CD8-positive, alpha-beta T cell (primary cell): ENCODE measurements at regions of chr3 and their contacts with region 1.

Region 1: DNA sequence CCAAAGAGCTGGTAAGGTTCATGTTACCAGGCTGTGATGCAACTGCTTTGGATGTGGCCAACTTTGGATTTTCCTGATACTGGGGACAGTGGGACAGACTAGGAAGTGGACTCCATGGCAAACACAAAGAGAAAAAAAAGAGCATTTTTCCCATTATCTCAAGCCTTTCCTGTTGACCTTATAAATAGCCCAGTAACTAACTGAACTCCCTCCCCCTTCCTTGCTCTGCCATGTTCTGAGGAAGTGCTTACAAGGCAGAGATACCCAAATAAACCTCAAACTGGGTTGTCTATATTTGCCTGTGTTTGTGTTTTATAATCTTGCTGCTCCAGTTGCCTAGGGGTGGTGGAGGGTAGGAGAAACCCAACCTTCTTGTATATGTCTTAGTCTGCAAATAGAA is 27.3 kb upstream of the SLC9A9 start:
- DNase-seq: no peak
- ATAC-seq: no peak
- H3K4me3 ChIP-seq: no peak overlapping the region
- H3K4me3 Mint-ChIP-seq: no peak overlapping the region
- H3K27ac ChIP-seq: no peak overlapping the region
- H3K27ac Mint-ChIP-seq: no peak overlapping the region
- H3K4me1 ChIP-seq: no peaks in the 10 kb centered on the region
- H3K4me1 Mint-ChIP-seq: no peaks in the 10 kb centered on the region
- H3K27me3 ChIP-seq: no peaks in the 10 kb centered on the region
- H3K27me3 Mint-ChIP-seq: peaks cover 3% of the 10 kb centered on the region
- CTCF ChIP-seq: no peak

Region 2: DNA sequence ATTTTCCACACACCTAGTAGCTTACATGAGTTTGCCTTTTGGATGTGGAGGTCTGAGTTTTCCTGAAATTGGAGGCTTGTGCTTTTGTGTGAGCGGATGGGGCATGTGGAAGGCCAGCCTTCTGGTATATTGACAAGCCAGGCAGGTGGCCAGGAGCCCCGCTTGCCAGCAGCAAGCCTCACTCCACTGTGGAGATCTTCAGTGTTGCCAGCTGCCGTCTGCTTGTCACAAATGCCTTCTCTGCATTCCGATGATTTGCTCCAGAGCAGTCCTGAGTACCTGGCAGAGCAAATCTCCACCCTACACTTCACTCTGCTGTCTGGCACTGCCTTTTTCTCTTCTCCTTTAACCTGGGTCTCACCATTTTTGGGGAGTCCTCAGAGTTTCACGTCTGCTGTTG is 785.1 kb before region 1 on chr3:
- CTCF ChIA-PET with region 1: no interaction called
- POLR2A ChIA-PET with region 1: no interaction called
- intact Hi-C with region 1: no loop called
- DNase-seq: no peak
- ATAC-seq: no peak
- H3K4me3 ChIP-seq: no peak overlapping the region
- H3K4me3 Mint-ChIP-seq: no peak overlapping the region
- H3K27ac ChIP-seq: no peak overlapping the region
- H3K27ac Mint-ChIP-seq: no peak overlapping the region
- H3K4me1 ChIP-seq: no peaks in the 10 kb centered on the region
- H3K4me1 Mint-ChIP-seq: no peaks in the 10 kb centered on the region
- H3K27me3 ChIP-seq: no peaks in the 10 kb centered on the region
- H3K27me3 Mint-ChIP-seq: no peaks in the 10 kb centered on the region
- CTCF ChIP-seq: no peak

Region 3: GRCh38 chr3:143885780-143886427 is 10.4 kb after region 1 on chr3:
- CTCF ChIA-PET with region 1: interaction called, 10 read pairs
- POLR2A ChIA-PET with region 1: no interaction called
- intact Hi-C with region 1: no loop called
- DNase-seq: peak in 5 of 9 experiments; percentile 3 to 60 (median 22)
- ATAC-seq: peak; percentile 57
- H3K4me3 ChIP-seq: no peak overlapping the region
- H3K4me3 Mint-ChIP-seq: no peak overlapping the region
- H3K27ac ChIP-seq: no peak overlapping the region
- H3K27ac Mint-ChIP-seq: no peak overlapping the region
- H3K4me1 ChIP-seq: no peaks in the 10 kb centered on the region
- H3K4me1 Mint-ChIP-seq: no peaks in the 10 kb centered on the region
- H3K27me3 ChIP-seq: no peaks in the 10 kb centered on the region
- H3K27me3 Mint-ChIP-seq: no peaks in the 10 kb centered on the region
- CTCF ChIP-seq: peak; percentile 77